ENCODE measurements at regions of chr12 and their contacts with region 1.

Region 1: DNA sequence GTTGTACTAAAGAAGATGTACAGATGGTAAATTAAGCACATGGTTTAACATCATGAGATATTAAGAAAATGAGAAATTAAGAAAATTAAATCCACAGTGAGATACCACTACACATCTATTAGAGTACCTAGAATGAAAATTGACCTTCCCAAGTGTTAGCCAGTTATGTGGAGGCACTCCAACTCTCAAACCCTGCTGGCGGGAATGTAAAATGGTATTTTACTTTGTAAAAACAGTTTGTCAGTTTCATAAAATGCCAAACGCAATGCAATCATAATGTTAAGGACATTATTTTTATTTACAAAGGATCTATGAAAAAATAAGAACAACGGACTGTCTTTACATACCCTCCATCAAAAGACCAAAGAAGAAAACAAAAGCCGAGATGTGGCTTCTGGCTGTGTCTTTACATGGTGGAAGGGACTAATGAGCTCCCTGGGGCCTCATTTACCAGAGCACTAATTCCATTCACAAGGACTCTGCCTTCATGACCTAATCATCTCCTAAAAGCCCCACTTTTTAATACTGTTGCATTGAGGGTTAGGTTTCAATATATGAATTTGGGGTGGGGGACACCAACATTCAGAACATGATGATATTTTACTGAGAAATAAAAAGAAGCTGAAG is 1178.7 kb downstream of the AACS start:
- DNase-seq: no peak
- H3K4me3 ChIP-seq: no peak overlapping the region
- H3K27ac ChIP-seq: no peak overlapping the region
- H3K4me1 ChIP-seq: no peaks in the 10 kb centered on the region
- H3K27me3 ChIP-seq: no peaks in the 10 kb centered on the region
- CTCF ChIP-seq: no peak

Region 2: DNA sequence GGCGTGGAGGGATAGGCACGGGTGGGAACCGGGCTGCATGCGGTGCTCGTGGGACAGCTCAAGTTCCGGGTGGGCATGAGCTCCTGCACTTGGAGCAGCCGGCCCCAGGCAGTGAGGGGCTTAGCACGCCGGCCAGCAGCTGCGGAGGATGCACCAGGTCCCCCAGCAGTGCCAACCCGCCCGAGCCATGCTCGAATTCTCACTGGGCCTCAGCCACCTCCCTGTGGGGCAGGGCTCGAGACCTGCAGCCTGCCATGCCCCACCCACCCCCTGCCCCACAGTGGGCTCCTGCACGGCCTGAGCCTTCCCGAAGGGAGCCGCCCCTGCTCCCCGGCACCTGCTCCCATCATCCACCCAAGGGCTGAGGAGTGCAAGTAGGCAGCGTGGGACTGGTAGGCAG is 323.1 kb after region 1 on chr12:
- CTCF ChIA-PET with region 1: no interaction called
- POLR2A ChIA-PET with region 1: interaction called, 14 read pairs
- intact Hi-C with region 1: no loop called
- DNase-seq: no peak
- H3K4me3 ChIP-seq: no peak overlapping the region
- H3K27ac ChIP-seq: no peak overlapping the region
- H3K4me1 ChIP-seq: no peaks in the 10 kb centered on the region
- H3K27me3 ChIP-seq: no peaks in the 10 kb centered on the region
- CTCF ChIP-seq: no peak